ENCODE measurements at regions of chr11 and their contacts with region 1.

Region 1: GRCh38 chr11:75241036-75241905 is 697 bp downstream of the TPBGL start:
- DNase-seq: peak; percentile 54
- ATAC-seq: peak; percentile 91
- H3K4me3 ChIP-seq: peak overlapping the region; percentile 37 to 56
- H3K27ac ChIP-seq: peak overlapping the region; percentile 64; the same call in 1 of the 2 replicates
- H3K4me1 ChIP-seq: peaks cover 6 to 16% of the 10 kb centered on the region in 2 experiments; a peak in 3 of 4 replicates
- H3K27me3 ChIP-seq: no peaks in the 10 kb centered on the region
- CTCF ChIP-seq: peak; percentile 66 to 86 (median 70)
- POLR2A ChIP-seq: no peak
- RAD21 ChIP-seq: no peak; the same call in none of the 2 replicates

Region 2: GRCh38 chr11:74929431-74930363 is 311.6 kb before region 1 on chr11:
- CTCF ChIA-PET with region 1: interaction called, 5 read pairs
- POLR2A ChIA-PET with region 1: no interaction called
- RAD21 ChIA-PET with region 1: no interaction called
- intact Hi-C with region 1: loop called (anchors 2 kb)
- DNase-seq: peak; percentile 81
- ATAC-seq: peak; percentile 99
- H3K4me3 ChIP-seq: no peak overlapping the region
- H3K27ac ChIP-seq: no peak overlapping the region
- H3K4me1 ChIP-seq: no peaks in the 10 kb centered on the region
- H3K27me3 ChIP-seq: no peaks in the 10 kb centered on the region
- CTCF ChIP-seq: peak; percentile 85 to 99 (median 88)
- POLR2A ChIP-seq: no peak
- RAD21 ChIP-seq: peak; percentile 84

Region 3: DNA sequence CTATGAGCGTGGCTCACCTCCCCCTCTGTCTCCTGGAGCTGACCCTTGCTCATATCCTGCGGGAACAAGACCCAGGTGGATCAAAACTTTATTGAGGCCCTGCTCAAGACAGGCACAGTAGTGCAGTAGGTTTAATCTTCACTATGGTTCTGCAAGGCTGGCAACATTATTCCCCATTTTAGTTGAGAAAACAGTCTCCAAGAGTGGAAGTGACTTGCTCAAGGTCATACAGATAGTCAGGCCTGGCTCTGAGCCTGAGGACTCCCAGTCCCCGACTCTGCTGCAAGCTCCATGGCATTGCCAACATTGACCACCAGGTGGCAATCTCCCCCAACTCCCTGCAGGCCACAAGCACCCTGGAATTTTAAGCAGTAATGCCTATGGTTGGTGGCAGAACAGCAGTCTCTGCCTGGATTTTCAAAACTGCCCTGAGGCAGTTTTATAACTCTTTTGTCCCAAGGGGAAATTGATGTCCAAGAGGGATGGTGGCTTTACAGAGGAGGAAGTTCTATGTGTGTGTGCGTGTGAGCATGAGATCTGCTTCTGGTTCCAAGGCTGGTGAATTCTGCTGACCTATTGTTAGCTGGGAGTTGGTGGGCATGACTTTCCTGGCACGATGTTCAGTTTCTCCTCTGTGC is 218.4 kb before region 1 on chr11:
- CTCF ChIA-PET with region 1: interaction called, 69 read pairs
- POLR2A ChIA-PET with region 1: no interaction called
- RAD21 ChIA-PET with region 1: no interaction called
- intact Hi-C with region 1: no loop called
- DNase-seq: peak; percentile 60
- ATAC-seq: peak; percentile 99
- H3K4me3 ChIP-seq: no peak overlapping the region
- H3K27ac ChIP-seq: no peak overlapping the region
- H3K4me1 ChIP-seq: no peaks in the 10 kb centered on the region
- H3K27me3 ChIP-seq: no peaks in the 10 kb centered on the region
- CTCF ChIP-seq: peak; percentile 95 to 98 (median 98)
- POLR2A ChIP-seq: no peak
- RAD21 ChIP-seq: peak; percentile 95

Measured in HCT116 (cell line).